ENCODE measurements at regions of chr1 and their contacts with region 1.

Region 1: GRCh38 chr1:228139944-228140656 is at the start of gene GUK1:
- DNase-seq: peak; percentile 100
- ATAC-seq: peak; percentile 91
- H3K4me3 ChIP-seq: peak within 1 kb of the TSS; percentile 84
- H3K27ac ChIP-seq: peak within 1 kb of the TSS; percentile 44
- H3K4me1 ChIP-seq: peaks cover 23% of the 10 kb centered on the region
- H3K27me3 ChIP-seq: no peaks in the 10 kb centered on the region
- CTCF ChIP-seq: peak; percentile 42
- total RNA-seq, gene GUK1: 996 and 1,117 TPM in 2 replicates

Region 2: GRCh38 chr1:228109073-228109961 is 30.8 kb before region 1 on chr1 and contains the start of gene MRPL55:
- CTCF ChIA-PET with region 1: no interaction called
- POLR2A ChIA-PET with region 1: no interaction called
- intact Hi-C with region 1: loop called (anchors 1 kb)
- DNase-seq: peak; percentile 100
- ATAC-seq: peak; percentile 86
- H3K4me3 ChIP-seq: peak within 1 kb of the TSS; percentile 87
- H3K27ac ChIP-seq: peak within 1 kb of the TSS; percentile 31
- H3K4me1 ChIP-seq: peaks cover 19% of the 10 kb centered on the region
- H3K27me3 ChIP-seq: no peaks in the 10 kb centered on the region
- CTCF ChIP-seq: peak; percentile 37; the same call in 1 of the 2 replicates
- total RNA-seq, gene MRPL55: 343 and 375 TPM in 2 replicates

Region 3: GRCh38 chr1:228390649-228391048 is 250.5 kb after region 1 on chr1:
- CTCF ChIA-PET with region 1: no interaction called
- POLR2A ChIA-PET with region 1: no interaction called
- intact Hi-C with region 1: no loop called
- DNase-seq: no peak
- ATAC-seq: no peak
- H3K4me3 ChIP-seq: no peak overlapping the region
- H3K27ac ChIP-seq: no peak overlapping the region
- H3K4me1 ChIP-seq: no peaks in the 10 kb centered on the region
- H3K27me3 ChIP-seq: no peaks in the 10 kb centered on the region
- CTCF ChIP-seq: no peak